Naive thymus-derived CD4-positive, alpha-beta T cell (primary cell): ENCODE measurements at regions of chr4 and their contacts with region 1.

Region 1: DNA sequence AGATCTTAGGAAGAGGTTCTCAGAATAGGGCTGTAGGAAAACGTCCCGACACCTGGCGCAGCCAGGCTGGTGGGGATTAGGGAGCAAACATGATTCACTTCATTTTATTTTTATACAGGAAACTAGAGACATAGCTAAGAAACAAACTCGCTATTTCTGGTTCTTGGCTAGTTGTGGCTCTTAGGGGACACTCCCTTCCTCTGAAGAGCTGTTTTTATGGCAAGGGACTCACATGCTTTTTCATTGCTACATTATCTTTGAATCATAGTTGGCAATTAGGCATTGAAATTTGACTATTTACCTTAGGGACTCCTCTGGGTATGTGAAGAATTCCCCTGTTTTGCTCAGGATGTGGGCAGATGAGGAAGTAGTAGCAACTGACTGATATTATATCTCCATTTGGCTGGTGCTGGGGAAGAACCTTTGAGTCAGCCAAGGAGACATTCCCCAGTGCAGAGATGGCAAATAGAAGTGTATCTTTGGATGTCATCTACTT is 174.5 kb downstream of the SMIM20 start:
- DNase-seq: peak in 1 of 9 donors; percentile 45
- ATAC-seq: peak; percentile 83
- H3K4me3 ChIP-seq: no peak overlapping the region
- H3K4me3 Mint-ChIP-seq: peak overlapping the region in 1 of 10 donors; percentile 73
- H3K27ac ChIP-seq: no peak overlapping the region
- H3K27ac Mint-ChIP-seq: peak overlapping the region in 1 of 9 donors; percentile 85
- H3K4me1 ChIP-seq: peaks cover 0 to 6% of the 10 kb centered on the region in 2 donors
- H3K4me1 Mint-ChIP-seq: peaks cover 0 to 60% (median 6%) of the 10 kb centered on the region in 7 donors
- H3K27me3 ChIP-seq: no peaks in the 10 kb centered on the region
- H3K27me3 Mint-ChIP-seq: peaks cover 0 to 24% (median 7%) of the 10 kb centered on the region in 5 donors

Region 2: GRCh38 chr4:26076000-26076587 is 12.4 kb before region 1 on chr4:
- CTCF ChIA-PET with region 1: interaction called, 4 read pairs
- POLR2A ChIA-PET with region 1: no interaction called
- intact Hi-C with region 1: loop called in 1 of 2 experiments (anchors 1 kb)
- DNase-seq: peak in 1 of 9 donors; percentile 53
- ATAC-seq: peak; percentile 77
- H3K4me3 ChIP-seq: no peak overlapping the region
- H3K4me3 Mint-ChIP-seq: peak overlapping the region in 1 of 10 donors; percentile 63
- H3K27ac ChIP-seq: no peak overlapping the region
- H3K27ac Mint-ChIP-seq: peak overlapping the region in 1 of 9 donors; percentile 91
- H3K4me1 ChIP-seq: peaks cover 0 to 15% of the 10 kb centered on the region in 2 donors
- H3K4me1 Mint-ChIP-seq: peaks cover 3 to 63% (median 14%) of the 10 kb centered on the region in 7 donors
- H3K27me3 ChIP-seq: no peaks in the 10 kb centered on the region
- H3K27me3 Mint-ChIP-seq: peaks cover 0 to 15% (median 0%) of the 10 kb centered on the region in 5 donors

Region 3: DNA sequence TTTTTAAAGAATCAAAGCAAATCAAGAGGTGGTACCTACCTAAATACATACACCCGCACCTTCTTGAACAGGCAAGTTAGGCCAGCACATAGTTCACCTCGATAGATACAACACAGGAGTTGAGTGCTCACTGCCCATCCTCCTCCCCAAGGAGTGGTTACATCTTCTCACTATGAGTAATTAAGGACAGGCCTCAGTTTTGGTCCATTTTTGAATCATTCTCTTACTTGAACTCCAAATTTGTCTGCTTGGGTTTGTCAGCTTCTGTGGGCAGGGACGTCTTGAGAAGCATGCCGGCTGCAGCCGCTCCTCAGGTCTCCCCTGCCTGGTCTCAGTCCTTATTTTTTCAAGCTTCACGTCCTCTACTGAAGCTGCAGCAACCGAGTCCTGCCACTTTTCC is 41.7 kb after region 1 on chr4:
- CTCF ChIA-PET with region 1: no interaction called
- POLR2A ChIA-PET with region 1: no interaction called
- intact Hi-C with region 1: loop called in 1 of 2 experiments (anchors 5 kb)
- DNase-seq: no peak
- ATAC-seq: no peak
- H3K4me3 ChIP-seq: no peak overlapping the region
- H3K4me3 Mint-ChIP-seq: peak overlapping the region in 1 of 10 donors; percentile 6
- H3K27ac ChIP-seq: no peak overlapping the region
- H3K27ac Mint-ChIP-seq: peak overlapping the region in 1 of 9 donors; percentile 68
- H3K4me1 ChIP-seq: peaks cover 0 to 14% of the 10 kb centered on the region in 2 donors
- H3K4me1 Mint-ChIP-seq: peaks cover 0 to 54% (median 0%) of the 10 kb centered on the region in 7 donors
- H3K27me3 ChIP-seq: no peaks in the 10 kb centered on the region
- H3K27me3 Mint-ChIP-seq: peaks cover 0 to 13% (median 9%) of the 10 kb centered on the region in 5 donors